Activated CD4-positive, alpha-beta T cell treated with anti-CD3 and anti-CD28 coated beads, Interleukin-2, amount 10 ng/mL, durations not matched to agents 7 days and 5 days (primary cell): ENCODE measurements at regions of chr15 and their contacts with region 1.

Region 1: DNA sequence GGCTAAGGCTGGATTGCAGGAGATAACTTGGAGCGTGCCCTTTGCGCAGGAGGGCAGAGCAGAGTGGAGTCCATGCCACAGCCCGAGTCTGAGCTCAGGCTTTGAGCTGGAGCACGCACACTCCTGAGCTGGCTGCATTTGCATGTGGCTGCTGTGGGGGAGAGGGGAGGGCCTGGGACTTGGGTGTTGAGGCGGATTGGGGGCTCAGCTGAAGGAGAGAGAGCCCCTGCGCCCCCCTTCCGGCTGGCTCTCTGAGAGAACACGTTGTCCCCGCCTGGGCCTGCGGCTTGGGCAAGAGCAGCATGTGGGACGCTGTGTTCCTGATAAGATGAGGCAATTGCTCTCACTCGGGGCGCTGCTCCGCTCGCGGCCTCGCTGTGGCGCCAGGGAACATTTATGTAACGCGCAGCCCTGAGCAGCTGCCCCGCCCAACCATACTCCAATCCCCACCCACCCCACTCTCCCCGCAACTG is 39.1 kb downstream of the KLF13 start:
- DNase-seq: peak; percentile 84
- H3K4me3 Mint-ChIP-seq: peak overlapping the region; percentile 71
- H3K27ac Mint-ChIP-seq: peak overlapping the region; percentile 90
- H3K4me1 Mint-ChIP-seq: peaks cover 99% of the 10 kb centered on the region
- H3K27me3 Mint-ChIP-seq: no peaks in the 10 kb centered on the region

Region 2: GRCh38 chr15:31080591-31081014 is 285.1 kb before region 1 on chr15:
- CTCF ChIA-PET with region 1: no interaction called
- POLR2A ChIA-PET with region 1: no interaction called
- DNase-seq: peak; percentile 10
- H3K4me3 Mint-ChIP-seq: peak overlapping the region; percentile 34
- H3K27ac Mint-ChIP-seq: no peak overlapping the region
- H3K4me1 Mint-ChIP-seq: peaks cover 6% of the 10 kb centered on the region
- H3K27me3 Mint-ChIP-seq: peaks cover 10% of the 10 kb centered on the region

Region 3: DNA sequence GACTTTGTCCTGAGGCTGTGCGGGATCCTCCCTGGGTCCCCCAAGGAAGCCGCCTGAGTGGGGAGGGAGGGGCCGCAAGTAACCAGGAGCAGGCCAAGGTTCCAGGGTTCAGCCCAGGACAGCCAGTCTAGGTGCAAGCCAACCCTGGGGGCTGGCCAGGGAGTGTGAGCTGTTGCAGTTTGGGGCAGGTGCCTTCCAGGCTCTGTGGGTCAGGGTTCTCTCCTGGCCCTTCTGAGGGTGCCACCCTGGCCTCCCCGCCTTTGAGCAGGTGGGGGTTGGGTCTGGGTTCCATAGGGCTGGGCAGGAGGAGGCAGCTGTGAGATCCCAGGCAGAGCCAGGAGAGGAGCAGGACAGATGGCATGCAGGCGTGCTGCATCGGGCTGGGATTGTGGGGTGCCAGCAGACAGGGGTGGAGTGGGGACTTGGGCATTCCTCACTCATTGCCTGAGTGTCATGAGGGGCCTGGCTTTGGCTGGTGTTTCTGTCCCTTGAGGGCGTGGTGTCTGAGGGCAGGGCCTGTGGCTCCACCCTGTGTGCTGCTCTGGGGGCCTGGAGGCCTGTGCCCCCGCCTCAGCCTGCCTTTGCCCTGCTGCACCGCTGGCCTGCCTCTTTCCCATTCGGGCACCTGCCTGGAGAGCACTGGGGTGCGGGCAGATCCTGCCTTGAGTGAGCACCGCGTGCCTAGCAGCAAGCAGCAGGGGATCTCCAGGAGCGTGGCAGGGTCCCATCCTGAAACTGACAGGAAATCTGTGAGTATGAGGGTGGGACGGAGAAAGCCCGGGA is 20.7 kb before region 1 on chr15:
- CTCF ChIA-PET with region 1: interaction called, 39 read pairs
- POLR2A ChIA-PET with region 1: interaction called, 4 read pairs
- DNase-seq: no peak
- H3K4me3 Mint-ChIP-seq: peak overlapping the region; percentile 81
- H3K27ac Mint-ChIP-seq: peak overlapping the region; percentile 95
- H3K4me1 Mint-ChIP-seq: peaks cover 100% of the 10 kb centered on the region
- H3K27me3 Mint-ChIP-seq: no peaks in the 10 kb centered on the region

Region 4: DNA sequence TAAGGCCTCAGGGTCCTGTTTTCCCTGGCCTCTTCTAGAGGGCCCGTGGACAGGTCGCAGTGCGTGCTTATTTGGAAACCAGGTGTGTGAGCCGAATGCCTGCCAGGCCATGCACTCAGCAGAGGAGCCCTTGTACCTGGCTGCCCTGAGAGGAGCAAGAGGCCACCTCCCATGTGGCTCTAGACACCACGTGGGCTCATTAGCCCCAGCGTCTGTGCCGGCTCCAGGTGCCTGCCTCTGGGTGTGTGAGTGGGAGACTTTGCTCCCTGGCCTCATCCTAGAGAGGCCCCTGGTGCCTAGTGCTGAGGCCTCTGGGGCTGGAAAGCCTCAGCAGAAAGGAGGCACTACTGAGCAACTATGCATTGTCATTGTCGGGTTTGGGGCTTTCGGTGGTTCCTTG is 11.3 kb after region 1 on chr15:
- CTCF ChIA-PET with region 1: interaction called, 11 read pairs
- POLR2A ChIA-PET with region 1: interaction called, 3 read pairs
- DNase-seq: no peak
- H3K4me3 Mint-ChIP-seq: no peak overlapping the region
- H3K27ac Mint-ChIP-seq: no peak overlapping the region
- H3K4me1 Mint-ChIP-seq: peaks cover 63% of the 10 kb centered on the region
- H3K27me3 Mint-ChIP-seq: no peaks in the 10 kb centered on the region